Activated T-helper 2 cell treated with anti-CD3 and anti-CD28 coated beads, Interferon-gamma antibody, Interleukin-2, Interleukin-4, amounts not matched to agents 10 μg/mL and 5 μg/mL and 100 μg/mL, durations not matched to agents 14 hours and 24 hours and 36 hours (primary cell): ENCODE measurements at regions of chr4 and their contacts with region 1.

Region 1: DNA sequence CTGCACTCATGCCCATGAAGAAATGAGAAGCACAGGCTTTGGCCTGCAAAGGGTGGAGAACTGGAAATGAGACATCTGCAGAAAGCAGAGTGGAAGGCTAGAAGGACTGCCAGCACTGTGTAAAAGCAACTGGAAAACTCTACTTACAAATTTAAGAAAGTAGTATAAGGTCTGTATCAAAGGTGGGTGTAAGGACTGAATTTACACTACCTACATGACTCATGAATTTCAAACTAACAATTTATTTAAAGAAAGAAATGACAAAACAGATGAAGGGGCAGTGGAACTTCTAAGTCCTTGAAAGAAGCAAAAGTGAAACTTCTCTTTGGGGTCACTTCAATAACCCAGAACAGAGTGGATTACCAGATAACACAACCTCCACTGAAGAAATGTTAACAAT is 71.2 kb downstream of the SLC10A7 start:
- DNase-seq: no peak
- H3K4me3 Mint-ChIP-seq: peak overlapping the region; percentile 32
- H3K27ac Mint-ChIP-seq: peak overlapping the region; percentile 84
- H3K4me1 Mint-ChIP-seq: peaks cover 33% of the 10 kb centered on the region
- H3K27me3 Mint-ChIP-seq: no peaks in the 10 kb centered on the region

Region 2: DNA sequence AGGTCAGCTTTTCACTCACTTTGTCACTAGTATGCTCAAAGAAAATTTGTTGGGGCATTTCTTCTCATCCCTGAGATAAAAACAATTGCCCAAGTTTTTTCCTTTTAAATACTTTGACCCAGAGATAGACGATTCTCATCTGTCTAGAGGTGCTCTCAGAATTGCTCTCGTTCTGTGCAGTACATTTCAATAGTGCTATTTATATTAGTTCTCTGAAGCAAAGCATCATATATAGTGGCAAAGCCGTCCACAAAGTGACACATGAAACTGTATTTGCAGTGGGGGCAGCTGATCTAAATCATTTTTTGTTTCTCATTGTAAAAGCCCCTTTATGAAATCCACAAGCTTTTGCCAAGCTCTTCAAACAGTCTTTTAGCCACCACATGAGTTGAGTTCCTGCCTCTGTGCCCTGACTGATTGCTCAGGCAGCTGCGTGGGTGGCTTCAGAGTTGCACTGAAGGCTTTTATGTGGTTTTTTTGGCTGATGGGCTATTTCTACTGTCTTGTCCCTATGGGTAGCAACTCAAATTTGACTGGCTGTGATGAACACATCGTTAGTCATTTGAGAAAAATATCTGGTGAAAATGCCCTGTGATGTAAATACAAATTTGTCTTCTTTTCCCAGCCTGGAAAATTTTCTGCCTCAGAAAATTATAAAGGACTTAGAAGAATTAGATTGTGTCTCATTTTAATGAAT is 1151.0 kb before region 1 on chr4:
- intact Hi-C with region 1: no loop called
- DNase-seq: peak; percentile 21
- H3K4me3 Mint-ChIP-seq: no peak overlapping the region
- H3K27ac Mint-ChIP-seq: peak overlapping the region; percentile 53
- H3K4me1 Mint-ChIP-seq: peaks cover 14% of the 10 kb centered on the region
- H3K27me3 Mint-ChIP-seq: peaks cover 21% of the 10 kb centered on the region

Region 3: DNA sequence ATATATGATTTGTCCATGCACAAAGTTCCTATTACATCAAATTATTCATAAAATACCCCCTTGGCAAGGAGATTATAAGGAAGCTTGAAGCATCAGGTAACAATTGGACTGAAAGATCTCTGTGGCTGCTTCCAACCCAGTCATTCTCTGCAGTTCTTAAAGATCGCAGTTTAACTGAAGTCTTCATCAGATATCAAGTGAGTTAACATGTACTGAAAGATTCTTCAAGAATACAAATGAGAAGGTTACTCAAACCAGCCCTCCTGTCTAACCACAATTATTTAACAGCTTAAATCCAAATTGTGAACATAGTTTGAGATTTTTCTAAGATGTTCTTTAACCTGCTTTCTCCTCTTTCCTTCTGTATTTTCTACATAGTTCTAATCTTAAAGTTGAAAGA is 15.1 kb after region 1 on chr4:
- intact Hi-C with region 1: loop called (anchors 1 kb)
- DNase-seq: no peak
- H3K4me3 Mint-ChIP-seq: no peak overlapping the region
- H3K27ac Mint-ChIP-seq: no peak overlapping the region
- H3K4me1 Mint-ChIP-seq: peaks cover 15% of the 10 kb centered on the region
- H3K27me3 Mint-ChIP-seq: no peaks in the 10 kb centered on the region